ENCODE measurements at regions of chr9 and their contacts with region 1.

Region 1: DNA sequence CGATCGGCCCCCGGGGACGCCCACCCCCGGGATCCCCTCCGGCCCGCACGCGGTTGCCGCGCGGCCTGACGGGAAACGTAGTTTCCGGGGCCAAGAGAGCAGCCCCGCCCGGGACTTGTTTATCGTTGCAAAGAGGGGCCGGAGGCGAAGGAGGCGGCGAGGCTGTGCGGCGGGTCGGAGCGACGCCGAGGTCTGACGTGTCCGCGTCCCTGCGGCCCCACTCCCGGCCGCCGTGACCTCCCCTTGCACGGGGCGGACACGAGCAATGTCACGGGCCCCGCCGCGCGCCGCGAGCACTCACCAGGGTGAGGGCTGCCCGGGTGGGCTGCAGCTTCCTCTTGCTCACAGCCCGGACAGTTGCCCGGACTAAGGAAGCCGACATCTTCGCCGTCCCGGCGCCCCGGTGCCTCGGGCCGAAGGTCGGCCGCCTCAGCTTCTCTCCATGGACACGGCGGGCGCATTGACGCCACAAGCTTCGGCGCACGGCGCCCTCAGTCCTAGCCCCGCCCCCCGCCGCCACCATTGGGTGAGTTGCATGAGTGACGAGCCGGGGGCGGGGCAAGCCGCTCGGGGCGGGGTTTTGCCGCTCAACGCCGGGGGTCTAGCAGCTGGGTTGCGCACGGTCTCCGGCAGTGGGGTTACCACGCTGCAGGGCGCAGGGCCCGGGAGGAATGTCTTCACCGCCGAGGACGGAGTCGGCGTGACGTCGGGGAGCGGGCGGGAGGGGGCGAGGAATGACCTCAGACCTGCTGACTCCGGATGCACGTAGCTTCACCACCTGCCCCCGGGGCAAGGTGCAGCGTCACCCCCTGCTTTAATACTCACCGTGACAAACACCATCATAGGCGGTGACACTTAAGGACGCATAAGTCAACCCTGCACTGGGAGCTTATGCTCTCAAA is at the start of gene ISCA1:
- DNase-seq: peak; percentile 97
- ATAC-seq: peak; percentile 85
- H3K4me3 ChIP-seq: peak within 1 kb of the TSS; percentile 82 to 95 (median 89)
- H3K4me3 Mint-ChIP-seq: peak within 1 kb of the TSS; percentile 91
- H3K27ac ChIP-seq: peak within 1 kb of the TSS; percentile 94 to 96
- H3K27ac Mint-ChIP-seq: peak within 1 kb of the TSS; percentile 97
- H3K4me1 ChIP-seq: peaks cover 11 to 14% of the 10 kb centered on the region in 2 donors
- H3K4me1 Mint-ChIP-seq: peaks cover 27% of the 10 kb centered on the region
- H3K27me3 ChIP-seq: no peaks in the 10 kb centered on the region
- H3K27me3 Mint-ChIP-seq: no peaks in the 10 kb centered on the region
- CTCF ChIP-seq: no peak
- total RNA-seq, gene ISCA1: 29.4 and 32.7 TPM in 2 replicates

Region 2: DNA sequence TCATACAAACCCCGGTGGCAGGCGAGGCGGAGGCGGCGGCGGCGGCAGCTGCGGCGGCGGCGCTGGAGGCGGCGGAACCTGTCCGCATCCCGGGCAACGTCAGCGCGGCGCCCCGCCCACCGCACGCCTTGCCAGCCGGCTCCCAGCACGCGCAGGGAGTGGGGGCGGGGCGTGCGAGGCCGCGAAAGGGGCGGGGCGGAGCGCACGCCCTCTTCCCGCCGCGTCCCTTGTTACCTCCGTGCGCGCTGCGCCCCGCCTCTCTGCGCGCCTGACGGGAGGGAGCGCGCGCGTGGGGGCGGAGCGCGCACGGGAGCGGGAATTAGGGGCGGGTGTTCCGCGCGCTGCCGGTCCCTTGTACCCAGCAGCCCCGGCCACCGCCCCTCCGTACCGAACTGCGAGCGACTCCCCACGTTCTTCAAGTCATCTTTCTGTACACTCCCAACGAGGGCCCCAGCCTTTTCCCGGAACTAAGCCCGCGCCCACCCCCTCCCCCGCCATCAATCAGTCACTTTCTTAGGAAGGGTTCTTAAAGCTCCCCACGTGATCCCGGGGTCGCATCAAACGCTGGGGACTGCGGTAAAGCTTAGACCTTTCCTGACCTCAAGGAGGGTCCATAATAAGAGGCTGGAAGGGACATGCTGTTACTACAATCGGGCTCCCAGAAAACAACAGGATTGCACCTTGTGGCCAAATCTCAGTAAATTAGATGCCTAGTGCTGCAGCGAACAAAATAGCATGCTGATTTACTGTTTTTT is 540.3 kb before region 1 on chr9 and contains the start of gene AGTPBP1:
- CTCF ChIA-PET with region 1: no interaction called
- POLR2A ChIA-PET with region 1: no interaction called
- intact Hi-C with region 1: loop called (anchors 1 kb)
- DNase-seq: peak; percentile 97
- ATAC-seq: peak; percentile 92
- H3K4me3 ChIP-seq: peak within 1 kb of the TSS; percentile 80 to 91 (median 82)
- H3K4me3 Mint-ChIP-seq: peak within 1 kb of the TSS; percentile 99
- H3K27ac ChIP-seq: peak within 1 kb of the TSS; percentile 76 to 96
- H3K27ac Mint-ChIP-seq: peak within 1 kb of the TSS; percentile 96
- H3K4me1 ChIP-seq: peaks cover 9 to 11% of the 10 kb centered on the region in 2 donors
- H3K4me1 Mint-ChIP-seq: peaks cover 21% of the 10 kb centered on the region
- H3K27me3 ChIP-seq: peaks cover 0 to 3% (median 0%) of the 10 kb centered on the region in 4 experiments
- H3K27me3 Mint-ChIP-seq: peaks cover 7% of the 10 kb centered on the region
- CTCF ChIP-seq: no peak
- total RNA-seq, gene AGTPBP1: 33.1 and 35.4 TPM in 2 replicates

Region 3: DNA sequence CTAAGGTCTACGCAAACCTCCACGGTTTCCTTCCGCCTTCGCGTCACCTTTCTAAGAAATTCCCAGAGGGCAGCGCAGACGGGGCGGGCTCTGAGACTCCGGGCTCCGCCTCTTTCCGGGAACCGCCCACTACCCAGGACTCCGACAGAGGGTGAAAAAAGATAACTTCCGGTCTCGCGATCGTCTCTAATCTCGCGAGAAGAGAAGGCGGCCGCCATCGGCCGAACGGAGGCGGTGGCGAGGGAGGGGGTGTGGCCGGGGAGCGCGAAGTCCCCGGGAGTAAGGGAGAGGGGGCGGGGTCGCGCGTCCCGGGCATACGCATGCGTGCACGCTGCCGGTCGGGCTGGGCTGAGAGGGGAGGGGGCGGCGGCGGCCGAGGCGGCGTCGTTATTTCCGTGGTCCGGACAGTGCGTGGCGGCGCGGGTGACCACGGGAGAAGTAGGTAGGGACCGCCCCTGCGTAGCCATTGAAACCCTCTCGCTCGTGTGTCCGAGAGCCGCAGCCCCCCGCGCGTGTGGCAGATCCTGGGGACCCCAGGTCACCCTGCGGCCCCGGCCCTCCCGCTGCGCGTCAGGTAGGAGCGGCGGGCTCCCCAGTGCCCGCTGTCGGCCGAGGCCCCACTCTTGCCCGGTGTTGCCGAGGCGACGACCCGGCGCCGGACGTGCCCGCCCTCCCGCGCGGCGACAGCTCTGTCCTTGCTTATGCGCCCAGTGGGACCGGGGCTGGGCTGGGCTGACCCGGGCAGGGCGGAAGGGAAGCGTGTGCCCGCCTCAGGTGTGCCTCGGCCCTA is 341.3 kb before region 1 on chr9 and contains the start of gene NAA35:
- CTCF ChIA-PET with region 1: no interaction called
- POLR2A ChIA-PET with region 1: no interaction called
- intact Hi-C with region 1: loop called (anchors 1 kb)
- DNase-seq: peak; percentile 100
- ATAC-seq: peak; percentile 85
- H3K4me3 ChIP-seq: peak within 1 kb of the TSS; percentile 59 to 94 (median 85)
- H3K4me3 Mint-ChIP-seq: peak within 1 kb of the TSS; percentile 92
- H3K27ac ChIP-seq: peak within 1 kb of the TSS; percentile 79 to 90
- H3K27ac Mint-ChIP-seq: peak within 1 kb of the TSS; percentile 93
- H3K4me1 ChIP-seq: peaks cover 22 to 26% of the 10 kb centered on the region in 2 donors
- H3K4me1 Mint-ChIP-seq: peaks cover 27% of the 10 kb centered on the region
- H3K27me3 ChIP-seq: peaks cover 0 to 7% (median 0%) of the 10 kb centered on the region in 4 experiments
- H3K27me3 Mint-ChIP-seq: peaks cover 10% of the 10 kb centered on the region
- CTCF ChIP-seq: no peak
- total RNA-seq, gene NAA35: 26.1 and 26.2 TPM in 2 replicates

Region 4: DNA sequence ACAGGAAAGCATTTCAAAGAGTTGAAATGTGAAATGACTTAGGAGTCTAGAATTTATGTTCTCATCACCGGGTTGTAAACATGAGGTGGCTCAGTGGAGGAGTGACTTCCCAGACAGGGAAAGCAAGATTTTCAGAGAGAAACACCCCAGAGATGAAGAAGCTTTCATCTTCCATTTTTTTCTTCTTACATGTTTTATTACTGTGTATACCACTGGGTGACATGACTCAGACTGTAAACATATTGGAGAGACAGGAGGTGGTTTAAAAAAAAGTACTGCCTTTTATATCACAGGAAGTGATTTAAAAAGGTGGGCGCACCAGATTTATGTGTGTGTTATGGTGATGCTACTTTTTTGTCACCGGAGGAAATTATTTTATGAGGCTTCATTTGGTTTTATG is 281.0 kb after region 1 on chr9:
- CTCF ChIA-PET with region 1: no interaction called
- POLR2A ChIA-PET with region 1: no interaction called
- intact Hi-C with region 1: no loop called
- DNase-seq: no peak
- ATAC-seq: no peak
- H3K4me3 ChIP-seq: no peak overlapping the region
- H3K4me3 Mint-ChIP-seq: no peak overlapping the region
- H3K27ac ChIP-seq: no peak overlapping the region
- H3K27ac Mint-ChIP-seq: no peak overlapping the region
- H3K4me1 ChIP-seq: no peaks in the 10 kb centered on the region
- H3K4me1 Mint-ChIP-seq: no peaks in the 10 kb centered on the region
- H3K27me3 ChIP-seq: no peaks in the 10 kb centered on the region
- H3K27me3 Mint-ChIP-seq: no peaks in the 10 kb centered on the region
- CTCF ChIP-seq: no peak

Region 5: DNA sequence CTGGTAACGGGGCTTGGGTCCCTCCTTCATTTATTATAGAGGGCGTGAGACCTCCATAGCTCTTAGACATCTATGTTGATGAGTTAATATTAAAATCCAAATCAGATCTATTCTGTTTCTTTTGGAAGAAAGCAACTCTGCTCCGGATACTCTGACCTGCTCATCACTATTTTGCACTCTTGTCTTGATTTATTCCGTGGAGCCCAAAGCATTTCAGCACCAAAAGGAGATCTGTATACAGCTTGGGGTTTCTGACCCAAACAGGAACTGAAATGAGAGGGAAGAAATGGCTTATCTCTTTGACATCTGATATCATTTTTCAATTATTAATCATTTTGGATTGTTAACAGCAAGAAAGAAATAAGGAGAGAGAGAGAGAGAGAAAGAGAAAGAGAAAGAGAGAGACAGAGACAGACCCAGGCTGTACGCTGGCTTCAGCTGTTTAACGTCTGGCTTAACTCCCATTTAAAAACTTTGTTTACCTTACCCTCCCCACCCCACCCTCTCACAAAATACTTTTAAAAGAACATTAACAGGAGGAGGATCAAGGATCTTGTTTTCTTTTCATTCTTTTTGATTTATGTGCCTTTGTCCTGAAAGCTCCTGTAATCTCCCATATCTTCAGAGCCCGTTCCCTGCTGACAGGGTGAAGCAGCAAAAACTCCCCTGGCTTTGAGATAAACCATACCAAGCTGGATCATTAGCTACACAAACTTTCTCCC is 303.3 kb after region 1 on chr9:
- CTCF ChIA-PET with region 1: no interaction called
- POLR2A ChIA-PET with region 1: no interaction called
- intact Hi-C with region 1: no loop called
- DNase-seq: no peak
- ATAC-seq: no peak
- H3K4me3 ChIP-seq: peak overlapping the region in 1 of 5 experiments; percentile 3
- H3K4me3 Mint-ChIP-seq: no peak overlapping the region
- H3K27ac ChIP-seq: peak overlapping the region in 1 of 2 donors; percentile 12
- H3K27ac Mint-ChIP-seq: no peak overlapping the region
- H3K4me1 ChIP-seq: no peaks in the 10 kb centered on the region
- H3K4me1 Mint-ChIP-seq: no peaks in the 10 kb centered on the region
- H3K27me3 ChIP-seq: no peaks in the 10 kb centered on the region
- H3K27me3 Mint-ChIP-seq: no peaks in the 10 kb centered on the region
- CTCF ChIP-seq: no peak